Right lobe of liver (tissue), 6 donors: ENCODE measurements at regions of chr13 and their contacts with region 1.

Region 1: DNA sequence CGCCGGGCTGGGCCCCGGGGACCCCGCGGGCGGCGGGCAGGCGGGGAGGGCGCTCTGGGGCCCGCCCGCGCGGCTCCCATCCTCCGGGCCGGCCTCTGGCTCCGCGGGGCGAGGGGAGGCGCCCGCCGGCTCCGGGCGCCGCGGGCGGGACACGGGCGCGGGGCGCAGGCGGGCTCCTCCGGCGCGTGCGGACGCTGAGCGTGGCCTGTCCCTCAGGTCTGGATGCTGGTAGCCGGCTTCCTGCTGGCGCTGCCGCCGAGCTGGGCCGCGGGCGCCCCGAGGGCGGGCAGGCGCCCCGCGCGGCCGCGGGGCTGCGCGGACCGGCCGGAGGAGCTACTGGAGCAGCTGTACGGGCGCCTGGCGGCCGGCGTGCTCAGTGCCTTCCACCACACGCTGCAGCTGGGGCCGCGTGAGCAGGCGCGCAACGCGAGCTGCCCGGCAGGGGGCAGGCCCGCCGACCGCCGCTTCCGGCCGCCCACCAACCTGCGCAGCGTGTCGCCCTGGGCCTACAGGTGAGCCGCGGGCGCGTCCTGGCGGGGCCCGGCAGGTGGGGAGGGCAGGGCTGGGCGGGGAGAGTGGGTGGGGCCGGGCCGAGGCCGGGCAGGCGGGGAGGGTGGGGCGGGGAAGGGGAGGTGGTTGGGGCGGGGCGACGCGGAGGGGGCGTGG is 414 bp downstream of the IL17D start:
- DNase-seq: peak; percentile 74 to 79 (median 75)
- ATAC-seq: peak; percentile 86 to 93 (median 88)
- H3K4me3 ChIP-seq: peak overlapping the region in 2 of 3 donors; percentile 41 to 60
- H3K27ac ChIP-seq: no peak overlapping the region
- H3K4me1 ChIP-seq: no peaks in the 10 kb centered on the region
- H3K27me3 ChIP-seq: peaks cover 0 to 6% of the 10 kb centered on the region in 2 donors
- CTCF ChIP-seq: peak; percentile 28 to 65 (median 44)
- POLR2A ChIP-seq: peak; percentile 15

Region 2: DNA sequence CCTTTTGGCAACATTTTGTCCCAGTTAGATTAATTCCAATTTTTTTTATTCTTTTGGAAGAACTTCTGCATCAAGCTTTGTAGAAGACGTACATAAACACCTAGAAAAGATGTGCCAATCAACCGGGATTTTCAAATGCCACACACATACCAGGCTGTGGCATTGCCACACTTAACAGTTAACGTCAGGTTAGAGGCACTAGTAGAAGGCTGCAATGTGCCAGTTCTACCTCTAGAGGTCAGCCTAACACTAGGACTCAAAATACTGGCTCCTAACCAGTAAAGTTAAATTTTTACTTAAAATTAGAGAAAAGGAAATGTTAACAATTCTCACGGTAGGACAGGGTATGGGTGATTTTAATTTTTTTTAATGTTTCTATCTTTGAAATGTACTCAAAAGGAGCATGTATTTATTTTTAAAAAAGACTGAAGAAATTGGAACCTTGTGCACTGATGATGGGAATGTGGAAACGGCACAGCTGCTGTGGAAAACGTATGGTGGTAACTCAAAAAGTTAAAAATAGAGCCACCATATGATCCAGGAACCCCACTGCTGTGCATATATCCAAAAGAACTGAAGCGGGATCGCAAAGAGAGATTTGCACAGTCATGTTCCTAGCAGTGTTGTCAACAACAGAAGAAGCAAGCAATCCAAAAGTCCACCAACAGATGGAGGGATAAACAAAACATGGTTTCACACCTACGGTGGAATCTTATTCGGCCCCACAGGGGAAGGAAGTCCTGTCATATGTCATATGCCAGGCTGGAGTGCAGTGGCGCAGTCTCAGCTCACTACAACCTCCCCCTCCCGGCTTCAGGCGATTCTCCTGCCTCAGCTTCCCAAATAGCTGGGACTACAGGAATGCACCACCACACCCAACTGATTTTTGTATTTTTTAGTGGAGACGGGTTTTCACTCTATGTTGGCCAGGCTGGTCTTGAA is 208.6 kb before region 1 on chr13:
- intact Hi-C with region 1: loop called in 1 of 2 experiments (anchors 10 kb)
- DNase-seq: no peak
- ATAC-seq: peak; percentile 82 to 91 (median 90)
- H3K4me3 ChIP-seq: peak overlapping the region in 1 of 3 donors; percentile 32
- H3K27ac ChIP-seq: peak overlapping the region in 2 of 3 donors; percentile 56 to 68
- H3K4me1 ChIP-seq: peaks cover 0 to 33% (median 8%) of the 10 kb centered on the region in 4 donors
- H3K27me3 ChIP-seq: no peaks in the 10 kb centered on the region
- CTCF ChIP-seq: peak; percentile 95 to 99 (median 96)
- POLR2A ChIP-seq: no peak

Region 3: GRCh38 chr13:20843166-20843565 is 139.3 kb after region 1 on chr13:
- intact Hi-C with region 1: no loop called
- DNase-seq: no peak
- ATAC-seq: no peak
- H3K4me3 ChIP-seq: no peak overlapping the region
- H3K27ac ChIP-seq: no peak overlapping the region
- H3K4me1 ChIP-seq: peaks cover 0 to 7% (median 0%) of the 10 kb centered on the region in 4 donors
- H3K27me3 ChIP-seq: no peaks in the 10 kb centered on the region
- CTCF ChIP-seq: no peak
- POLR2A ChIP-seq: no peak